ENCODE measurements at regions of chr14 and their contacts with region 1.

Region 1: DNA sequence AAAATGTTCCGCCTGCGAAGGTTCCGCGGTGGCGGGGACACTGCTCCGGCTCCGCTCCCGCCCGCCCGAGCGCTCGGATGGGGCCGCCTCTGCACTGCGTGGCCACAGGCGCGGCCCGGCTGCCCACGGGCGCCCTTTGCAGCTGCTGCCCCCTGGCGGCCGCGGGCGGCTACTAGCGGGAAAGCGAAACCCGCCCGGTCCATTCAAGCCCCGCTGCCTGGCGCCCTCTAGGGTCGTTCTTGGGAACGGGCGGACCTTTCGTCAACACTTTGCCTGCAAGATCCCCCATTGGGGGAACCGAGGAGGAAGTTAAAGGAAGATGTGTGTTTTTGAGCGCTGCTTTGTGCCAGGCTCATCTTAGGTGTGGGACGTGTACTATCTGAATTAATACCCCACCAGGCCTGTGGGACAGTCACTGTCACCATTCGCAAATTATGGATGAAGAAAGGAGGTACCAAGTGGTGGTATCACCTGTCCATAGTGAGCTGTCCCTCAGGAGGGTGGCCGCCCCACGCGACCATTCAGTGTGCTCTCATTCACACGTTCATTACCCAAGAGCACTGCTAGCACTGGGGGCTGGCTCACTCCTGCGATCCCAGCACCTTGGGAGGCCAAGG is 19.4 kb downstream of the GPR132 start:
- DNase-seq: peak; percentile 87 to 91
- ATAC-seq: peak; percentile 82 to 92
- H3K4me3 ChIP-seq: peak overlapping the region; percentile 26; the same call in 1 of the 3 replicates
- H3K27ac ChIP-seq: peak overlapping the region; percentile 57 to 61; a peak in 5 of 6 replicates
- H3K4me1 ChIP-seq: 0 out of 3 replicates have a peak, but pooled peaks cover 7% of the 10 kb centered on the region
- CTCF ChIP-seq: peak; percentile 100
- EP300 ChIP-seq: no peak
- POLR2A ChIP-seq: no peak
- RAD21 ChIP-seq: peak; percentile 97 to 100

Region 2: DNA sequence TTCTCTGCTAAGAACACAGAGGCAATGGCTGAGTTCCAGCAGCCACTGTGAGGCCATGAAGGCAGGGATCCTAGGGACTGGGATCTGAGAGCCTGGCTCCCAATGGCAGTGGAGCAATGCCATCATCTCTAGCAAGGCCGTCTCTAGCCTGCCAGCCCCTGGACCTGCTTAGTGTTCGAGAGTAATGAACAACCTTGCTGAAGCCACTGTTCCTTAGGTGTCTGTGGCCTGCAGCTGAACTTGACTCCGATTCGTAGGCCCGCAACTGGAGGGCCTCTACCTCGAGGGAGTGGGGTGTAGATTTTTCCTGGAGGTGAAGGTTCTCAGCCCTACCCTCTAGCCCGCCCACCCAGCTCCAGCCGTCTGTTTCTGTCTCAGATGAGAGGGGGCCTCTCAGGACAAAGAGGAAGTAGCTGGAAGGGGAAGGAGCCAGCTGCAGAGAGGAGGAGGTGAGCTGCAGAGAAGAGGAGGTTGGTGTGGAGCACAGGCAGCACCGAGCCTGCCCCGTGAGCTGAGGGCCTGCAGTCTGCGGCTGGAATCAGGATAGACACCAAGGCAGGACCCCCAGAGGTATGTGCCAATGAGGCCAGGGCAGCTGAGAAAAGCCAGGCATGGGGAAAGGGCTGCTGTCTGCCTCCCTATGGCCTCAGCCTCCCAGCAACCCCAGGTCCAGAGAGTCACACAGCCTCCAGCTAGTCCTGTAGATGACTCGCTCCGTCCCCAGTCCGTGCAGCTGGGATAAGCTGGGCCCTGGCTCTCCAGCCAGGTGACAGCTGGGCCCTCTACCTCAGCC is 121.2 kb before region 1 on chr14 and contains the start of gene PLD4:
- CTCF ChIA-PET with region 1: interaction called, 10 read pairs
- POLR2A ChIA-PET with region 1: no interaction called
- DNase-seq: no peak
- ATAC-seq: no peak
- H3K4me3 ChIP-seq: no peak within 1 kb of the TSS
- H3K27ac ChIP-seq: no peak within 1 kb of the TSS
- H3K4me1 ChIP-seq: no peaks in the 10 kb centered on the region
- CTCF ChIP-seq: no peak
- EP300 ChIP-seq: no peak
- POLR2A ChIP-seq: no peak
- RAD21 ChIP-seq: no peak
- polyA plus RNA-seq, gene PLD4: 0.01 TPM in 2 replicates

Region 3: DNA sequence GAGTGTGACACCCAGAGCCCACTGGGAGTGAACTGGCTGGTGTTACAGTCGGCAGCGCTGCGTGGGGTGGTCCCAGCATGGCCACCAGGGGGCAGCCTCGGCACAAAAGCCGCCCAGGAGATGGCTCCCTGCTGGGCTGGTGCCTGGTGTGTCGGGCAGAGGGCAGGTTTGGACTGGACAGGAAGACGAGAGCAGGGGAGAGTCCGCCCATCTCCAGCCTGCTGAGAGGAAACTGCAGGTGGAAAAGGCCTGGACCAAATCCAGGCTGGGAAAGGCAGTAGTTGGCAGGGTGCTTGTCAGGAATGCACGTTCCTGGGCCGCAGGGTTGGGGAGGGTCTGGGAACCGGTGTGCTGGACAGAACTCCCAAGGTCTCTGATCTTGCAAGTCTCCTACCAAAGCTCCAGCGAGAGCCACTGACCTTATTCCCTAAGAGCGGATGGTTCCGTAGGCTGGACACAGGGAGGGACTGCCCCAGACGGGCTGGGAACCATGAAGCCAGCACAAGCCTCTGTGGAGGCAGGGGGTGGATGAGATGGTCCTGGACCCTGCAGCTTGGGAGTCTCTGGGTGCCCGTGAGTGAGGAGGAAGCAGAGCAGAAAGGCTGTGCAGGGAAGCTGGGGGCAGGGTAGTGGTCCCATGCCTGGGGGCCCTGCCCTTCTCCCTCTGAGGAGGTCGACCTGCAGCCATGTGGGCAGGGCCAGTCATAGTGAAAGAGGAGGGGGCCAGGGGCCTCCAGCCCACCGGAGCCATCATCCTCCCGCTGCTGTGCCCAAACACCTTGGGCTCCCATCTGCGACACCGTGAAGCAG is 69.4 kb before region 1 on chr14:
- CTCF ChIA-PET with region 1: interaction called, 235 read pairs
- POLR2A ChIA-PET with region 1: interaction called, 4 read pairs
- DNase-seq: peak; percentile 64 to 90
- ATAC-seq: peak in 1 of 2 experiments; percentile 56; a peak in 3 of 6 replicates
- H3K4me3 ChIP-seq: peak overlapping the region; percentile 63
- H3K27ac ChIP-seq: peak overlapping the region; percentile 97 to 99
- H3K4me1 ChIP-seq: peaks cover 81% of the 10 kb centered on the region
- CTCF ChIP-seq: peak; percentile 91
- EP300 ChIP-seq: no peak
- POLR2A ChIP-seq: 0 out of 2 replicates have a peak, but pooled peaks have one; percentile 21
- RAD21 ChIP-seq: peak; percentile 87 to 92

Region 4: DNA sequence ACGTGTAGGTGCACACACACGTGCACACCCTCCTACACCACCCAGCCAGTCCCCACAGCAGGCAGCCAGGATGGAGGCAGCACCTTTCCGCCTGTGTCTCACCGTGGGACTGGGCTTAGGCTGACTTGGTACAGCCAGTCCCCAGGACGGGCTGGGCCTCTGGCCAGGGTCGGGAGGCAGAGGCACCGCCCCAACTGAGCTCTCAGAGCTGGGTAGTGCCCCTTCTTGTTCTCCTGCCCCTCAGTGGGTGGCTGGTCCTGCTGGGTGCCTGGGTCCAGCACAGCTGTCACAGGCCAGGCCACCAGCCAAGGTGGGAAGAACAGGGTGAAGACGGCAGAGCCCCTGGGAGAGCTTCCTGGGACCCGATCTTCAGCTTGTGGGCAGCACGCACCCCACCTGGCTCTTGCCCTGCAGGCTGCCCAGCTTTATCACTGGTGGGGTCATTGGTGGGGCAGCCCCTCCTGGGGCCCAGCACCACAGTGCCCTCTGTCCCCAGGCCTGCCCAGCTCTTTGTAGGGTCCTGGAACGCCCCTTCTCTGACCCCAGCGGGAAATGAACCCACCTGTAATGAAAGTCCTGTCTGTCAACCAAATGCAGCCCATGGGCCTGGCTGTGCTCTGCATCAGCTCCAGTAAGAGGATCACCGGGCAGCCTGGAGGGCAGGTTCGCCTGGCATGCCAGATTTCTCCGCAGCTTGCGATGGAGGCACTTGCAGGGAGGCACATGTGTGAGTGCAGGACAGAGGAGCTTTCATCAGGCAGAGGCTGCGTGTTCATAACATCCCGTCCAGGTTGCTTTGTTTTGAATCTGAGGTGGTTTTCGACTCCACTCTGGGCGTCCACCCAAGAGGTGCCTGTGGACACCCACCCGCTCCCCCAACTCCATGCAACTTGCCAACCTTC is 39.6 kb before region 1 on chr14:
- CTCF ChIA-PET with region 1: interaction called, 509 read pairs
- POLR2A ChIA-PET with region 1: no interaction called
- DNase-seq: no peak
- ATAC-seq: peak; percentile 47 to 51
- H3K4me3 ChIP-seq: no peak overlapping the region
- H3K27ac ChIP-seq: no peak overlapping the region
- H3K4me1 ChIP-seq: no peaks in the 10 kb centered on the region
- CTCF ChIP-seq: no peak
- EP300 ChIP-seq: no peak
- POLR2A ChIP-seq: no peak
- RAD21 ChIP-seq: no peak

Region 5: DNA sequence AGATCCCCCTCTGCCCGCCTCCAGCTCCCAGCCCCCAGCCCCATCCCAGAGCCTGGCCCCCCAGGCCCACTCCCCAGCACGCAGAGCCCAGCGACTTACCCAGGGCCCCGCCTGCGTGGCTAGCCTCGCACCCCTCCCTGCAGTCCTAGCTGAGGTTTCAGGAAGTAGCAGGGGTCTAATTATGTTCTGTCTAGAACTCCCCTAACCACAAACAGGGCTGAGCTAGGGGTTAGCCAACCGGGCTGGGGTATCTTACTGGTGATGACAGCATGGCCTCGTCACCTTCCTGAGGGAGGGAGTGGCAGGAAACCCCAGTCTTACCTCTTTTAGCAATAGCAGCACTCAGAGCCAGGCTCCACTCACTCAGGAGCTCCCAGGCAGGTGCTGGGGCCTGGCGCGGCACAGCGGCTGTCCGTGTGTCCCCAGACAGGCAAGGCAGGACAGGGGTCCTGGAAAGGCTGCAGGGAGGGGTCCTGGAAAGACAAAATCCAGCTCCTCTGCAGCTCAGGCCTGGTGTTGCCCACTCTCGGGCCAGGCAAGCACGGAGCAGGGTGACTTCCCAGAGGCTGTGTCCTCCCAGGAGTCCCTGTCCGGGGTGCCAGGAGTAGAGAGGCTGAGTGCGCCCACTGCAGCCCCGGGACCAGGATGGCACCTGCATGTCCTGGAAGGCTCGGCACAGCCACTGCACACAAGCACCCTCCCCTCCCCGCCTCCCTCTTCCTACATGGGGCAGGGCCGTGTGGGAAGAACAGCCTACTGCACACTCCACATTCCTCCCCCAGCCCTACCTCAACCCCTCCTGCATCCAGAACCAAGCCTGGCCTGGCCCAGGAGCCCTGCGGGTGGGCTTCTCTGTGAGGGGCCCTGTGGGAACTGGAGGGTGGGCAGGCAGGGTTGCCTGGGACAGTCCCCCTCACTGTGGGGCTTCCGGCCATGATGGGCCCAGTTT is 19.7 kb after region 1 on chr14 and contains the start of gene GPR132:
- CTCF ChIA-PET with region 1: interaction called, 88 read pairs
- POLR2A ChIA-PET with region 1: no interaction called
- DNase-seq: no peak
- ATAC-seq: peak; percentile 23 to 37; a peak in 4 of 6 replicates
- H3K4me3 ChIP-seq: no peak within 1 kb of the TSS
- H3K27ac ChIP-seq: peak within 1 kb of the TSS in 1 of 2 experiments; percentile 67; a peak in 3 of 6 replicates
- H3K4me1 ChIP-seq: peaks cover 22% of the 10 kb centered on the region
- CTCF ChIP-seq: no peak
- EP300 ChIP-seq: no peak
- POLR2A ChIP-seq: no peak
- RAD21 ChIP-seq: no peak
- polyA plus RNA-seq, gene GPR132: 0.19 and 0.49 TPM in 2 replicates

Region 6: GRCh38 chr14:105300792-105301533 is 255.1 kb after region 1 on chr14 and contains the start of gene BRF1:
- CTCF ChIA-PET with region 1: no interaction called
- POLR2A ChIA-PET with region 1: no interaction called
- DNase-seq: peak; percentile 88 to 97
- ATAC-seq: peak; percentile 91 to 93
- H3K4me3 ChIP-seq: peak within 1 kb of the TSS; percentile 99
- H3K27ac ChIP-seq: peak within 1 kb of the TSS; percentile 96 to 98
- H3K4me1 ChIP-seq: 0 out of 3 replicates have a peak, but pooled peaks cover 3% of the 10 kb centered on the region
- CTCF ChIP-seq: no peak
- EP300 ChIP-seq: no peak
- POLR2A ChIP-seq: no peak; the same call in 1 of the 2 replicates
- RAD21 ChIP-seq: no peak
- polyA plus RNA-seq, gene BRF1: 7.0 and 8.5 TPM in 2 replicates